ENCODE measurements at regions of chr17 and their contacts with region 1.

Region 1: DNA sequence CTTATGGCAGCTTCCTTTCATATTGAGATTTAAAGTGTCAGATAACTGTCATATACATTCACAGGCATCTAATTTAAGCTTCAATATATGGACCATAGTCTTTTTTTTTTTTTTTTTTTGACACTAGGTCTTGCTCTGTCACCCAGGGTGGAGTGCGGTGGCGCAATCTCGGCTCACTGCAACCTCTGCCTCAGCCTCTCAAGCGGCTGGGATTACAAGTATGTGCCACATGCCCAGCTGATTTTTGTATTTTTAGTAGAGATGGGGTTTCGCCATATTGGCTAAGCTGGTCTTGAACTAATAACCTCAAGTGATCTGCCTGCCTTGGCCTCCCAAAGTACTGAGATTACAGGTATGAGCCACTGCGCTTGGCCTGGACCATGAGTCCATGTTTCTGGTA is 13.6 kb downstream of the CEP95 start:
- DNase-seq: no peak
- H3K4me3 ChIP-seq: no peak overlapping the region
- CTCF ChIP-seq: no peak

Region 2: DNA sequence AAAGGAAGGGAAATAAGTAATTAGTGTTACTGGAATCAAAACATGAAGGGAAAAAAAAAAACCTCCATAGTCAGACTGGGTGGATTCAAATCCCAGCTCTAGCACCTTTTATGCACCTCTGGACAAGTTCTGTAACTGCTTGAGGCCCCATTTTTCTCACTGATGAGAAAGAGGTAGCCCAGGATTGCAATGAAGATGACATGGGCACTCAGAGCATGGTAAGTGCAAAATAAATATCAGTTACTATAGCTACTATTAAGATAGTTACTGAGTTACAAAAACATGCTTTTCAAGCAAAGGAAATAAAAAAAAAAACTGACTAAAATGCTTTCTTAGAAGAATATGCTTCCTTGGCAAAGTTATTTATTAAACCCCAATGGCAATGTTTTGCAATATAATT is 45.2 kb after region 1 on chr17:
- in situ Hi-C with region 1: loop called (anchors 5 kb)
- DNase-seq: no peak
- H3K4me3 ChIP-seq: no peak overlapping the region
- CTCF ChIP-seq: no peak